ENCODE measurements at regions of chr18 and their contacts with region 1.

Region 1: DNA sequence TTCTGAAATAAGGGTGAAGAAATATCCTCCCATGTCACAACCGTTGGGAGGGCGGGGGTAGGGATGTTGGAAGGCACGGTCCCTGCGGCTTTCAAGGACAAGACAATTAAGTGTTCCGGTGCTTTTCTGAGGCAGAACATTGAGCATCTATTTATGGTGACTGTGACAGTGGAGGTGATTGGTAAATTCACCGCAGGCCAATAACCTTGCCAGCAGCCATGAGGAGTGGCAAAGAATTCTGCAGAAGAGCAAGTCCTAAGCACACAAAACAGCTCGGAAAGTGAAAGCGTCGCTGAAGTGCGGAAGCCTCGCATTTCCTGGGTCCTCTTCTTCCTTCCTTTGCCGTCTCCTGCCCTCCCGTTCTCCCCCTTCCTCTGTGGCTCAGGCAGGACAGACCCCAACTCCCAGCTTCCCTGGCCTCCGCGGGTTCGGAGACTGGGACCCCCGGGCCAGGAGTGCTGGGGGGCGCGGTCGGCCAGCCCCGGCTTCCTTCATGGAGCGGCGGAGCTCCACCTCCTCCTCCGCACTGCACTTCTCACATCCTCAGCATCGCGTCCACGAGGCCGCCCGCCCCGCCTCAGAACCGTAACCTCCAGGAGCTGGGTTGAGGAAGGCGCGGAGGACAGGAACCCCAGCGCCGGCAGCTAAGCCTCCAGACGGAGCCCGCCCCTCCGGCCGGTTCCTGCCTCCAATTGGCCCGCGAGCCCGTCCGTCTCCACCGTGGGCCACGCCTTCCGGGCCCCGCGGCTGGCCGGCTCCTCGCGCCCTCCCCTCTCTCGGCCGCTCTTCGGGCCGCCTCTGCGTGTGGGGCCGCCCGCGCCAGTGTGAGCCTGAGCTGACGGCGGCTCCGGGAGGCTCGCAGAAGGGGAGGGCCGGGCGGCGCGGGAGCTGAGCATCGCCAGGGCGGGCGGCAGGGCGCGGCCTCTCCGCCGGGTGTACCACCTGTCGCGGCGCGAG is at the start of gene ME2:
- DNase-seq: peak; percentile 91 to 95
- ATAC-seq: peak; percentile 98 to 99 (median 98)
- H3K4me3 ChIP-seq: peak within 1 kb of the TSS; percentile 99
- H3K27ac ChIP-seq: peak within 1 kb of the TSS; percentile 90
- H3K4me1 ChIP-seq: peaks cover 14% of the 10 kb centered on the region
- H3K27me3 ChIP-seq: no peaks in the 10 kb centered on the region
- CTCF ChIP-seq: no peak
- total RNA-seq, gene ME2: 31.0 to 63.8 (median 52.3) TPM

Region 2: DNA sequence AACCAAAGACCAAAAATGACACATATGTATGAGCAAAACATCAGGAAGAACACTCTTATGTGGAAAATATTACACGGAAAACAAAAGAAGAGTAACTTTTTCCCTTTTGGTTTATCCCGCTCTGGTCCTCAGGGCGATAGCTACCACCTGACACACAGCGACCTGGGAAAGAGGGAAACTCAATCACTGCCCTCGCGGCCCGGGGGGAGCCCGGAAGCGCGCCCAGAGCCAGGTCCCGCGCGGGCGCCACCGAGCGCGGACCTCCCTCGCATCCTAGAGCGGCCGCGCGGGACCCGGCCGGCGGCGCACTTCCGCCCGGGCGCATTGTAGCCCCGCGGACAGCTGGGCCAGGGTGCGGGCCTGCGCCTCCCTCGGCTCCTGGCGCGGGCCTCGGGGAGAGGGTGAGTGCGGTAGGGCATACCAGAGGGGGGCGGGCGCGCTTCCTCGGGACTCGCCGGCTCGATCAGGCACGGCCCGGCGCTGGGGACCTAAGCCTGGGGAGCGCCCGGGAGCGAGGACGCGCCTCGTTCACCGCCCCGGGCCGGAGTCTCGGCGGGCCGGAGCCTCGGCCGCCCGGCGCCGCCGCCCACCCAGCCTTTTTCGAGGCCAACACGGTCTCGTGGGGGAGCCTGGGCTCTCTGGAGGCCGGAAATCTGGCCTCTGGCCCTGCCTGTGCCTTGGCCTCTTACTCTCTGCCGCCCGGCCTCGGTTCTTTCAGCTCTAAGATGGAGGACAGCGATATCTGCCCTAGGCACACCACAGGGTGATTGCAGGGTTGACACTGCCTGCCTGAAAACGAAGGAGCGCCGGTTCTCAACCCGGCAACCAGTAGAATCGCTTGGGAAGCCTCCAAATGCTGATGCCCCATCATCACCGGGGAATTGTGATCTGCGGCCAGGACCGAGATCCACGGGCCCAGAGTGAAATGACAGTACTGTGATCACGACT is 89.4 kb after region 1 on chr18 and contains the start of gene ELAC1:
- intact Hi-C with region 1: loop called (anchors 5 to 10 kb)
- DNase-seq: peak; percentile 83 to 90
- ATAC-seq: peak; percentile 93 to 97 (median 95)
- H3K4me3 ChIP-seq: peak within 1 kb of the TSS; percentile 89
- H3K27ac ChIP-seq: peak within 1 kb of the TSS; percentile 97
- H3K4me1 ChIP-seq: peaks cover 23% of the 10 kb centered on the region
- H3K27me3 ChIP-seq: no peaks in the 10 kb centered on the region
- CTCF ChIP-seq: peak; percentile 5
- total RNA-seq, gene ELAC1: 2.8 to 5.4 (median 3.8) TPM